ENCODE measurements at regions of chr3 and their contacts with region 1.

Region 1: GRCh38 chr3:141460097-141460704 is 26.6 kb upstream of the RASA2 start:
- DNase-seq: peak; percentile 83 to 93 (median 88)
- ATAC-seq: peak; percentile 100
- H3K4me3 ChIP-seq: no peak overlapping the region
- H3K4me3 Mint-ChIP-seq: no peak overlapping the region
- H3K27ac ChIP-seq: no peak overlapping the region
- H3K27ac Mint-ChIP-seq: no peak overlapping the region
- H3K4me1 ChIP-seq: peaks cover 7% of the 10 kb centered on the region
- H3K4me1 Mint-ChIP-seq: peaks cover 7% of the 10 kb centered on the region
- H3K27me3 ChIP-seq: no peaks in the 10 kb centered on the region
- H3K27me3 Mint-ChIP-seq: no peaks in the 10 kb centered on the region
- CTCF ChIP-seq: peak; percentile 93

Region 2: DNA sequence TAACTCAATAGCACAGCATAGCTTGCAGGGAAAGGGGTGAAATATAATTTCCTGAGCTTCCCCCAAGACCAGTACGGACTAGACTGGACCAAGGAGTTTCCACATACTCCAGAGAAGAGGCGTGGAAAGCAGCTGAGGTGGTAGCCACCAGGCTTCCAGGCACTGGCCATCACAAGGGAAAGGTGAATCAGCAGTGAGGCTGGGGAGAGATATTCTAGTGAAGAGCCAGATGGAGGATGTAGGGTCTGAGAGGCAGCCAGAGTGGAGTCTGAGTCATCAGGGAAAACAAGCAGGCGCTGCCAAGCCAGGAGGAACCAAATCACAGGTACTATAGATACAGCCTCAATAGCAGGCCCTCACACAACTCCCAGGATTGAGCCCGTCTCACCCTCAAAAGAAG is 17.0 kb after region 1 on chr3:
- CTCF ChIA-PET with region 1: interaction called, 17 read pairs
- POLR2A ChIA-PET with region 1: no interaction called
- intact Hi-C with region 1: loop called in 1 of 2 experiments (anchors 1 kb)
- DNase-seq: no peak
- ATAC-seq: no peak
- H3K4me3 ChIP-seq: no peak overlapping the region
- H3K4me3 Mint-ChIP-seq: no peak overlapping the region
- H3K27ac ChIP-seq: no peak overlapping the region
- H3K27ac Mint-ChIP-seq: no peak overlapping the region
- H3K4me1 ChIP-seq: peaks cover 19% of the 10 kb centered on the region
- H3K4me1 Mint-ChIP-seq: peaks cover 49% of the 10 kb centered on the region
- H3K27me3 ChIP-seq: no peaks in the 10 kb centered on the region
- H3K27me3 Mint-ChIP-seq: no peaks in the 10 kb centered on the region
- CTCF ChIP-seq: no peak

Region 3: GRCh38 chr3:141561426-141562034 is 101.3 kb after region 1 on chr3:
- CTCF ChIA-PET with region 1: interaction called, 84 read pairs
- POLR2A ChIA-PET with region 1: interaction called, 13 read pairs
- intact Hi-C with region 1: loop called (anchors 1 kb)
- DNase-seq: peak in 9 of 14 experiments; percentile 14 to 85 (median 39)
- ATAC-seq: peak; percentile 60
- H3K4me3 ChIP-seq: no peak overlapping the region
- H3K4me3 Mint-ChIP-seq: peak overlapping the region; percentile 55
- H3K27ac ChIP-seq: no peak overlapping the region
- H3K27ac Mint-ChIP-seq: peak overlapping the region; percentile 67
- H3K4me1 ChIP-seq: peaks cover 3% of the 10 kb centered on the region
- H3K4me1 Mint-ChIP-seq: peaks cover 40% of the 10 kb centered on the region
- H3K27me3 ChIP-seq: no peaks in the 10 kb centered on the region
- H3K27me3 Mint-ChIP-seq: no peaks in the 10 kb centered on the region
- CTCF ChIP-seq: peak; percentile 98

Region 4: DNA sequence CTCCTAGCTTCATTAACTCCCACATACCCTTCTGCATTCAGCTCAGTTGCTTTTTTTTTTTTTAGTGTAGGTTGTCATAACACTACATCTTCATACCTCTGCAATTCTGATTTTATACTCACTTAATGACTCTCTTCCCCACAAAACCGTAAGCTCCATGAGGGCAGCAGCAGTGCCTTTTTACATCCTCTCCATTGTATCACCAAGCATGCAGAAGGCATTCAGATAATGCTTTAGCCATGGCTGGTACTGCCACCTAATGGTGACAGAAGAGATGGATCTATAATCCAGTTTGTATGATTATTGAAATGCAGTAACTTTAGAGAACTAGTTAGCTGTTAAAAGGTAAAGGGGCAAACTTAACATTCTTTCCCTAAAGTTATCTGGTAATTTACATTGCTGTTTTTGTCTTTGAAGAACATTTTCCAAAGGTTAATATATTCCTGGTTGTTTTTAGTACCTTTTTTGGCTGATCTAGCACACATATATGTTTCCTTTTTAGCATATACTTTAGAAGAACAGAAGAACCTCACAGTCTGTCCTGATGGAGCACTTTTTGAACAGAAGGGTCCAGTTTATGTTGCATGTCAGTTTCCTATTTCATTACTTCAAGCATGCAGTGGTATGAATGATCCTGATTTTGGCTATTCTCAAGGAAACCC is 453.1 kb after region 1 on chr3:
- CTCF ChIA-PET with region 1: no interaction called
- POLR2A ChIA-PET with region 1: no interaction called
- intact Hi-C with region 1: loop called (anchors 2 to 10 kb)
- DNase-seq: peak in 12 of 14 experiments; percentile 16 to 80 (median 34)
- ATAC-seq: peak; percentile 90
- H3K4me3 ChIP-seq: no peak overlapping the region
- H3K4me3 Mint-ChIP-seq: no peak overlapping the region
- H3K27ac ChIP-seq: no peak overlapping the region
- H3K27ac Mint-ChIP-seq: no peak overlapping the region
- H3K4me1 ChIP-seq: no peaks in the 10 kb centered on the region
- H3K4me1 Mint-ChIP-seq: peaks cover 4% of the 10 kb centered on the region
- H3K27me3 ChIP-seq: no peaks in the 10 kb centered on the region
- H3K27me3 Mint-ChIP-seq: no peaks in the 10 kb centered on the region
- CTCF ChIP-seq: peak; percentile 71

Region 5: DNA sequence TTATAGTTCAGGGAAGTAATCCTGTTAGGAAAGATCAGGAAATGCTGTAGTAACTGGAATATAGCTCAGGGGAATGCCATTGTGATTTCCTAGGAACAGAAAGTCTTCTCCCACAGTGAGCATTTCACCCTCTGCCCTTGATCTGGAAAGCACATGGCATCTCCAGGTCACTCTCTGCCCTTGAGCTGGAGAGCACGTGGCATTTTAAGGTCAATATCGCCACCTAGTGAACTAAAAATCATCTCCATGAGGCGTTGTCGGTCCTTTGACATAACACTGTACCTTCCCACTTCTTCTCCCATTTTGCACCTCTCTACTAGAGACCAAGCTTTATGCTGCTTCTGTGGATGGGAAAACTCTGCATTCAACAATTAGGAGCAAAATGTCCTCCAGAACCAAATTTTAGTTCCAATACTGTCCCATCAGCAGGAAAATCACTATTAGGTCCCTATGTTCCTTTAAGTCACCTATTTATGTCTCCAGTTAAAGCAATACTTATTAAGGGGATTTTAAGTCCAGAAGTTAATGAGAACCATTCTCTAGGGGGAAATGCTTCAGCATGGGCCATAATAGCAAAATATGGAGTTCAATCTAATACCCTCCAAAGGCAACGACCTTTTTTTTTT is 819.9 kb after region 1 on chr3:
- CTCF ChIA-PET with region 1: no interaction called
- POLR2A ChIA-PET with region 1: no interaction called
- intact Hi-C with region 1: loop called (anchors 5 to 10 kb)
- DNase-seq: peak in 12 of 14 experiments; percentile 1 to 80 (median 18)
- ATAC-seq: peak; percentile 80
- H3K4me3 ChIP-seq: no peak overlapping the region
- H3K4me3 Mint-ChIP-seq: no peak overlapping the region
- H3K27ac ChIP-seq: no peak overlapping the region
- H3K27ac Mint-ChIP-seq: no peak overlapping the region
- H3K4me1 ChIP-seq: peaks cover 12% of the 10 kb centered on the region
- H3K4me1 Mint-ChIP-seq: no peaks in the 10 kb centered on the region
- H3K27me3 ChIP-seq: no peaks in the 10 kb centered on the region
- H3K27me3 Mint-ChIP-seq: no peaks in the 10 kb centered on the region
- CTCF ChIP-seq: peak; percentile 77